ENCODE measurements at regions of chr10 and their contacts with region 1.

Region 1: DNA sequence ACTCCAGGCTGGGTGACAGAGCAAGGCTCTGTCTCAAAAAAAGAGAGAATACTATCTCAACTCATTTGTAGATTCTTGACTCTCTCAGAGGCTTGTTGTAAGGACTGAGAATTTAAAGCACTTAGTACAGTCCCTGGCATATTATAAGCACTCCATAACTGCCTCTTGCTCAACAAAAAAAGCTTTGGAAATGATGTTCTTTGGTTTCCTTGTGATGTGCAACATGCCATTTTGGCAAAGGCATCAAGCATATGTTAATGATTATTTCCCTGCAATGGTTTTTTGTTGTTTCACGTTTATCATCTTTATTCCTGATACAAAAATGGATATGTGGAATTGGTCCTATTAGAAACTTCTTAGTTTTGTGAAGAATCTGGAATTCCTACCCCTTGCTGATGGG is 15.7 kb downstream of the NOLC1 start:
- DNase-seq: no peak
- H3K4me3 ChIP-seq: no peak overlapping the region
- H3K27ac ChIP-seq: no peak overlapping the region
- H3K4me1 ChIP-seq: no peaks in the 10 kb centered on the region
- H3K27me3 ChIP-seq: no peaks in the 10 kb centered on the region
- CTCF ChIP-seq: no peak

Region 2: GRCh38 chr10:102352066-102352715 is 184.3 kb after region 1 on chr10:
- CTCF ChIA-PET with region 1: interaction called, 10 read pairs
- POLR2A ChIA-PET with region 1: no interaction called
- intact Hi-C with region 1: loop called (anchors 1 kb)
- DNase-seq: peak in 1 of 2 experiments; percentile 41
- H3K4me3 ChIP-seq: no peak overlapping the region
- H3K27ac ChIP-seq: no peak overlapping the region
- H3K4me1 ChIP-seq: no peaks in the 10 kb centered on the region
- H3K27me3 ChIP-seq: no peaks in the 10 kb centered on the region
- CTCF ChIP-seq: peak; percentile 87

Region 3: GRCh38 chr10:102375250-102375649 is 207.4 kb after region 1 on chr10:
- CTCF ChIA-PET with region 1: no interaction called
- POLR2A ChIA-PET with region 1: no interaction called
- intact Hi-C with region 1: no loop called
- DNase-seq: no peak
- H3K4me3 ChIP-seq: no peak overlapping the region
- H3K27ac ChIP-seq: no peak overlapping the region
- H3K4me1 ChIP-seq: 0 out of 2 replicates have a peak, but pooled peaks cover 4% of the 10 kb centered on the region
- H3K27me3 ChIP-seq: no peaks in the 10 kb centered on the region
- CTCF ChIP-seq: no peak

Region 4: DNA sequence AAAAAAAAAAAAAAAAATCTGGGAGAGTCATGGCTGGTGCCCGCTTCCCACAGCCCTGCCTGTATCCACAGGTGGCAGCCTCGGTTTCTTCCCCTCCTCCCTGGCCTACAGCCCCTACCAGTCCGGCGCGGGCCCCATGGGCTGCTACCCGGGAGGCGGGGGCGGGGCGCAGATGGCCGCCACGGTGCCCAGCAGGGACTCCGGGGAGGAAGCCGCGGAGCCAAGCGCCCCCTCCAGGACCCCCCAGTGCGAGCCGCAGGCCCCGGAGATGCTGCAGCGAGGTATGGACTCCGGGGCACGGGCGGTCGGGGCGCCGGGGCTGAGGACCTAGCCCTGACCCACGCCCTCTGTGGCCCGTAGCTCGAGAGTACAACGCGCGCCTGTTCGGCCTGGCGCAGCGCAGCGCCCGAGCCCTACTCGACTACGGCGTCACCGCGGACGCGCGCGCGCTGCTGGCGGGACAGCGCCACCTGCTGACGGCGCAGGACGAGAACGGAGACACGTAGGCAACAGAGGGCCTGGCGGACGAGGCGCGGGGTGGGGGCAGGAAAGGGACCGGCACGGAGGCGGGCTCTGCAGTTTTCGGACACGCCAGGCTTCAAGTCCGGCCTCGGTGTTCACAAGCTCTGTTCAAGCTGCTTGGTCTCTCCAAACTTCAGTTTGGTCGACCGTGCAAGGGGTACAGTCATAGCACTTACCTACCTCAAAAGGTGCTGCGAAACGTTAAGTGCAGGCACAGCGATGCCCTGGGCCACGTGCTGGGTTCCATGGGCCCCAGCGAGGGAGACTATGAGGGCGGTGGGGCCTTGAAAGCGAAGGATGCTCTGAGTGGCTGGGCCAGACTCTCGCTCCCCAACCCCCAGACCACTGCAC is 231.6 kb after region 1 on chr10:
- CTCF ChIA-PET with region 1: interaction called, 3 read pairs
- POLR2A ChIA-PET with region 1: no interaction called
- intact Hi-C with region 1: loop called (anchors 2 kb)
- DNase-seq: peak; percentile 56 to 83
- H3K4me3 ChIP-seq: peak overlapping the region; percentile 52
- H3K27ac ChIP-seq: no peak overlapping the region
- H3K4me1 ChIP-seq: peaks cover 18% of the 10 kb centered on the region
- H3K27me3 ChIP-seq: no peaks in the 10 kb centered on the region
- CTCF ChIP-seq: peak; percentile 80

Region 5: GRCh38 chr10:102583435-102584417 is 415.9 kb after region 1 on chr10:
- CTCF ChIA-PET with region 1: interaction called, 10 read pairs
- POLR2A ChIA-PET with region 1: no interaction called
- intact Hi-C with region 1: loop called (anchors 10 kb)
- DNase-seq: peak; percentile 60 to 66
- H3K4me3 ChIP-seq: no peak overlapping the region
- H3K27ac ChIP-seq: no peak overlapping the region
- H3K4me1 ChIP-seq: no peaks in the 10 kb centered on the region
- H3K27me3 ChIP-seq: no peaks in the 10 kb centered on the region
- CTCF ChIP-seq: peak; percentile 83

Measured in PC-9 (cell line).